ENCODE measurements at regions of chr22 and their contacts with region 1.

Region 1: GRCh38 chr22:17171313-17172171 is 12.5 kb upstream of the HDHD5 start:
- DNase-seq: peak; percentile 93 to 95
- ATAC-seq: peak; percentile 90 to 96 (median 94)
- H3K4me3 ChIP-seq: peak overlapping the region; percentile 29 to 74 (median 65)
- H3K27ac ChIP-seq: peak overlapping the region; percentile 89 to 99 (median 96)
- H3K4me1 ChIP-seq: peaks cover 0 to 37% (median 14%) of the 10 kb centered on the region in 9 donors
- H3K27me3 ChIP-seq: no peaks in the 10 kb centered on the region
- CTCF ChIP-seq: peak; percentile 63 to 97 (median 78)

Region 2: DNA sequence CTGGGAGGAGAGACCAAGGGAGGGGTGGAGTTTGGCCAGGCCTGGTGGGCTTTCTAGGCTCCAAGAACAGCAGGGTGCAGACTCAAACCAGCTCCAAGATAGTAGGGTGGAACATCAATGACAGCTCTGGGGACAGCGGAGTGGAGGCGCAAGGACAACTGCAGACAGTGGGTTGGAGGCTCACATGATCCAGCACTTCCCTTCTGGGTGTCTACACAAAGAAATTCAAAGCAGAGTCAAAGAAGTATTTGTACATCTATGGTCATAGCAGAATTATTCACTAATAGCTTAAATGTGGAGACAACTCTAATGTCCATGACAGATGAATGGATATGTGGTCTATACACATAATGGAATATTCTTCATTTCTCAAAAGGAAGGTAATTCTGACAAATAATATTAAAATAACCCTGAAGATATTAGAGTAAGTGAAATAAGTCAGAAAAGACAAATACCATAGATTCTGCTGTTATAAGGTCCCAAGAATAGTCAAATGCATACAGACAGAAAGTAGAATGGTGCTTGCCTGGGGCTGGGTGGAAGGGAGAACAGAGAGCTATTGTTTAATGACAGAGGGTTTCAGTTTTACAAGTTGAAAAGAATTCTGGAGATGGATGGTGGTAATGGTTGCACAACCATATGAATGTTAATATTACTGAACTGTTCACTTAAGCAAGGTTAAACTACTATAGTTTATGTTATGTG is 158.0 kb before region 1 on chr22:
- intact Hi-C with region 1: no loop called
- DNase-seq: no peak
- ATAC-seq: no peak
- H3K4me3 ChIP-seq: no peak overlapping the region
- H3K27ac ChIP-seq: no peak overlapping the region
- H3K4me1 ChIP-seq: no peaks in the 10 kb centered on the region
- H3K27me3 ChIP-seq: peaks cover 0 to 64% (median 19%) of the 10 kb centered on the region in 7 donors
- CTCF ChIP-seq: no peak

Region 3: GRCh38 chr22:17063411-17064106 is 108.0 kb before region 1 on chr22:
- intact Hi-C with region 1: no loop called
- DNase-seq: peak in 1 of 2 donors; percentile 23
- ATAC-seq: peak in 7 of 8 donors; percentile 22 to 87 (median 61)
- H3K4me3 ChIP-seq: no peak overlapping the region
- H3K27ac ChIP-seq: peak overlapping the region in 7 of 10 donors; percentile 12 to 56 (median 37)
- H3K4me1 ChIP-seq: peaks cover 0 to 26% (median 9%) of the 10 kb centered on the region in 9 donors
- H3K27me3 ChIP-seq: peaks cover 0 to 4% (median 0%) of the 10 kb centered on the region in 7 donors
- CTCF ChIP-seq: peak in 1 of 9 donors; percentile 18

Region 4: DNA sequence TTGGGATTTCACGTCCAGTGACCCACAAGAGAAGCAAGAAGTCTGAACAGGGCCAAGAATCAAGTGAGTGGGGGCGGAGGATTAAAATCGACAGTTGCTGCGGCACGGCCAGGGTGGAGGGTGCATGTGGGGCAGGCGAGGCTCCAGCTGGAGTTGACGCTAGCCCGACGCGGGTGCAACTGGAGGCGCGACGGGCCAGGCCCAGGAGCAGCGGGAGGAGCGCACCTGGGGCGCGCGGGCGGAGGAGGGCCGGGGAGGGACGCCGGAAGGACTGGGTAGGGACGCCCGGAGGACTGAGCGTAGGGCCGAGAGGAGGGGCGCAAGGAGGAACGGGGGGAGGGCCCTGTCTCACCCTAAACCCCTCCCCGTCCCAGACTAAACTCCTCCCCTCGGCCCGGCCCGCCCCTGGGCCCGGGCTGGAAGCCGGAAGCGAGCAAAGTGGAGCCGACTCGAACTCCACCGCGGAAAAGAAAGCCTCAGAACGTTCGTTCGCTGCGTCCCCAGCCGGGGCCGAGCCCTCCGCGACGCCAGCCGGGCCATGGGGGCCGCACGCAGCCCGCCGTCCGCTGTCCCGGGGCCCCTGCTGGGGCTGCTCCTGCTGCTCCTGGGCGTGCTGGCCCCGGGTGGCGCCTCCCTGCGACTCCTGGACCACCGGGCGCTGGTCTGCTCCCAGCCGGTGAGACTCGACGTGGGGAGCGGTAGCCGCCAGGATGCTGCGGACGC is 86.8 kb before region 1 on chr22 and contains the start of gene IL17RA:
- intact Hi-C with region 1: loop called in 9 of 10 experiments (anchors 5 to 10 kb)
- DNase-seq: peak; percentile 92 to 93
- ATAC-seq: peak; percentile 98 to 99 (median 99)
- H3K4me3 ChIP-seq: peak within 1 kb of the TSS; percentile 72 to 98 (median 96)
- H3K27ac ChIP-seq: peak within 1 kb of the TSS; percentile 49 to 99 (median 90)
- H3K4me1 ChIP-seq: peaks cover 0 to 48% (median 17%) of the 10 kb centered on the region in 9 donors
- H3K27me3 ChIP-seq: no peaks in the 10 kb centered on the region
- CTCF ChIP-seq: peak in 1 of 9 donors; percentile 4
- total RNA-seq, gene IL17RA: 4.0 to 15.9 (median 5.9) TPM

Region 5: GRCh38 chr22:17104336-17104935 is 67.1 kb before region 1 on chr22:
- intact Hi-C with region 1: no loop called
- DNase-seq: no peak
- ATAC-seq: no peak
- H3K4me3 ChIP-seq: no peak overlapping the region
- H3K27ac ChIP-seq: peak overlapping the region in 1 of 10 donors; percentile 86
- H3K4me1 ChIP-seq: peaks cover 0 to 70% (median 0%) of the 10 kb centered on the region in 9 donors
- H3K27me3 ChIP-seq: no peaks in the 10 kb centered on the region
- CTCF ChIP-seq: no peak

Region 6: DNA sequence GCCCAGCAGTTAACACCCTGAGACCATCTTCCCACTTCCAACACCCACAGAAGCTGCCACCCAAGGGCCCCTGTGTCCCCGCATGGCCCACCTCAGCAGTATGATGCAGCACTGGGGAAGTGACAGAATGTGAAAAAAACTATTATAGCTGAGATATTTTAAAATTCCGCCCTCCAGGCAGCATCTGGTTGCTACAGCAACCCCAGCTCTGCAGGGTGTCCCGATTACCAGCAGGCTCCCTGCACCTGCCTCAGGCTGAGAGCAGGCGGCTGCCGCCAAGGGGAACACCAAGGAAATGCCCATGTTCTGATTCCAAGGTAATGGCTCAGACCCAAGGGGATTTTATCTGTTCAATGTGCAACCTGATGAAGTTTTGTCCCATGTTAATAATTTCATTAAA is 39.9 kb before region 1 on chr22:
- intact Hi-C with region 1: no loop called
- DNase-seq: no peak
- ATAC-seq: peak in 7 of 8 donors; percentile 67 to 84 (median 80)
- H3K4me3 ChIP-seq: peak overlapping the region in 4 of 10 donors; percentile 12 to 24 (median 14)
- H3K27ac ChIP-seq: peak overlapping the region in 8 of 10 donors; percentile 33 to 69 (median 54)
- H3K4me1 ChIP-seq: peaks cover 0 to 15% (median 5%) of the 10 kb centered on the region in 9 donors
- H3K27me3 ChIP-seq: no peaks in the 10 kb centered on the region
- CTCF ChIP-seq: peak in 3 of 9 donors; percentile 25 to 33 (median 30)

Region 7: GRCh38 chr22:17158568-17159503 is 12.7 kb before region 1 on chr22 and contains the start of gene HDHD5:
- intact Hi-C with region 1: loop called in 1 of 10 experiments (anchors 1 kb)
- DNase-seq: peak; percentile 91 to 92
- ATAC-seq: peak; percentile 90 to 96 (median 93)
- H3K4me3 ChIP-seq: peak within 1 kb of the TSS; percentile 58 to 87 (median 74)
- H3K27ac ChIP-seq: peak within 1 kb of the TSS; percentile 86 to 97 (median 92)
- H3K4me1 ChIP-seq: peaks cover 6 to 51% (median 30%) of the 10 kb centered on the region in 9 donors
- H3K27me3 ChIP-seq: no peaks in the 10 kb centered on the region
- CTCF ChIP-seq: peak in 2 of 9 donors; percentile 7 to 17
- total RNA-seq, gene HDHD5: 42.8 to 59.2 (median 50.3) TPM

Region 8: DNA sequence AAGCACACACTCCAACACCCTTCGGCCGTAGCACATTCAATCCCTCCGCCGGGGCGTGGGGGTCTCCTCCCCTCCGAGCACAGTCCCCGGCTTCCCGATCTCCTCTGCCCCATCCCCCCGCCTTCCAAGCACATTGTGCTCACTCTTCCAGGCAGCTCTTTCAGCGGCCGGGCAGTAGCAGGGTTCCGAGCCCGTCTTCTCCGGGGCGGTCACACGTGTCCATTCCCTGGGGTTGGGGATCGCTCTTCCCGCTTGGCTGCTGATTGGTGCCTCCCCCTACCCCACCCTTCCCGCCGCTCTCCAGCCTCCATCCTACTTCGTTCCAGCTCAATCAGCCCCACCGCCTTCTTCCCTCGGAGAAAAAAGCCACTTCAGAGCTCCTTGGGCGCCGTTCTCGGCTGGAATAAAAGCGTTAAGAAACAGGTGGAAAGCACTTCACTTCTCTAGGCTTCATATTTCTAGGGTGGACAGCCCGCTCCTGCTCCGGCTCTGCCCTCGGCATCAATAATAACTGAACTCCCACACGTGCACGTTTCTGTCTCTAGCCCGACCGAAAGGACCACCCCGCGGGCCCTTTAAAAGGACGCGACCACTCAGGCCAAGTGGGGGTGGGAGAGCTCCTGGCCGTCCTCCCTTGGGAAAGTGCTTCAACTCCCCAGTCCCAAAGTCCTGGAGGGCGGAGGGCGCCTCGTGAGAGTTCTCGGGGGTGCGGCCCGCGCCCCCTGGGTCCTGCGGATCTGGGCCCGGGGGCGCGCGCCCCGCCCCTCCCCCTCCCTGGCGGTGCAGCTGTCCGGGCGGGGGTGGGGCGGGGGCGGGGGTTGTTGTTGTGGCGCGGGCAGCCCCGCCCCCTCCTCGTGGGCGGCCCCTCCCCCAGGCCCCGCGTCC is 197.3 kb after region 1 on chr22:
- intact Hi-C with region 1: loop called in 2 of 10 experiments (anchors 5 kb)
- DNase-seq: peak; percentile 60 to 63
- ATAC-seq: peak; percentile 70 to 85 (median 76)
- H3K4me3 ChIP-seq: peak overlapping the region; percentile 41 to 88 (median 74)
- H3K27ac ChIP-seq: peak overlapping the region; percentile 64 to 90 (median 84)
- H3K4me1 ChIP-seq: peaks cover 0 to 29% (median 19%) of the 10 kb centered on the region in 9 donors
- H3K27me3 ChIP-seq: peaks cover 0 to 86% (median 3%) of the 10 kb centered on the region in 7 donors
- CTCF ChIP-seq: no peak

Region 9: DNA sequence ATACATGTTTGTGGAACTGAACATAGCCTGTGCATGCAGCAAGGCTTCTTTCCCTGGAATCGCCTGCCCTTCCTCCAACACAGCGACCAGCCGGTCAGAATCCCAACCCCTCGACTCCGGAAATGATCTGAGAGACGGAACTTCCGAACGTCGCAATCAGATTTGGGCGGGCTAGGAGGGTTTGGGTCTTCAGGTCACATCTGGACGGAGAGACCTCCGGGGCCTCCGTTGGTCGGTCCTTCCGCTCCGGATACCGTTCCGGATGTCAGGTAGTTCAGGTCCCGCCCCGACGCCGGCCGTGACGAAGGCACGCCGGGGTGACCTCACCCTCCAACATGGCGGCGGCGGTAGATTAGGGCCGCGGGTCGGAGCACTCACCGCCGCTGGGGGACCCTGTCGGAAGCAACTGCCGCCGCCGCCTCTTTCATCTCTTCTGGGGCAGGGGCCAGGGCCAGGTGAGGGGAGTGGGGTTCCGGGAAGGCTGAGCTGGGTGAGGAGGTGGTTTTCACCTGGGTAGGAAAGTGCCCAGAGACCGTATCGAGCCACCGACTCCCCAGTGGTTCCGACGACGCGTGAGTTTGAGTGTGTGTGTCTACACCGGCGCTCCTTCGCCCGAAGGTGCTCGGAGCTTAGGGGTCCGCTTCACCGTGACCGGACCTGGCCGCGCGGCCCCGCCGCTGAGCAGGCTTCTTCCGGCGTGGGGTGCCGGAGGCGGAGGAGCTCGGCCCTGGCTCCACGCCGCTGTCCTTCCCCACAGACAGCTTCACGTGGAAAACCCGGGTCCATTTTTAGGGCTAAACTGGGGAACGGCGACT is 467.1 kb after region 1 on chr22 and contains the start of gene BCL2L13:
- intact Hi-C with region 1: loop called in 1 of 10 experiments (anchors 10 kb)
- DNase-seq: peak; percentile 91
- ATAC-seq: peak; percentile 97 to 99 (median 98)
- H3K4me3 ChIP-seq: peak within 1 kb of the TSS; percentile 52 to 92 (median 76)
- H3K27ac ChIP-seq: peak within 1 kb of the TSS; percentile 93 to 100 (median 98)
- H3K4me1 ChIP-seq: peaks cover 3 to 27% (median 24%) of the 10 kb centered on the region in 9 donors
- H3K27me3 ChIP-seq: no peaks in the 10 kb centered on the region
- CTCF ChIP-seq: peak in 1 of 9 donors; percentile 17
- total RNA-seq, gene BCL2L13: 75.9 to 113 (median 91.2) TPM

Measured in heart right ventricle (tissue), 16 donors.